Adrenal gland (tissue), 19 donors: ENCODE measurements at regions of chr6 and their contacts with region 1.

Region 1: GRCh38 chr6:119742188-119742803 is 392.7 kb upstream of the MAN1A1 start:
- DNase-seq: peak; percentile 45 to 82 (median 69)
- H3K4me3 ChIP-seq: no peak overlapping the region
- H3K27ac ChIP-seq: no peak overlapping the region
- H3K4me1 ChIP-seq: no peaks in the 10 kb centered on the region
- H3K27me3 ChIP-seq: no peaks in the 10 kb centered on the region
- CTCF ChIP-seq: peak; percentile 59 to 85 (median 76)
- POLR2A ChIP-seq: no peak

Region 2: GRCh38 chr6:120826253-120826652 is 1084.0 kb after region 1 on chr6:
- intact Hi-C with region 1: loop called in 1 of 2 experiments (anchors 10 kb)
- DNase-seq: peak in 6 of 7 donors; percentile 34 to 61 (median 46)
- H3K4me3 ChIP-seq: no peak overlapping the region
- H3K27ac ChIP-seq: no peak overlapping the region
- H3K4me1 ChIP-seq: no peaks in the 10 kb centered on the region
- H3K27me3 ChIP-seq: no peaks in the 10 kb centered on the region
- CTCF ChIP-seq: peak; percentile 36 to 59 (median 50)
- POLR2A ChIP-seq: no peak